CD14-positive monocyte (primary cell): ENCODE measurements at regions of chr19 and their contacts with region 1.

Region 1: GRCh38 chr19:2475702-2476450 is at the start of gene GADD45B:
- DNase-seq: peak; percentile 97 to 99 (median 98)
- H3K4me3 ChIP-seq: peak within 1 kb of the TSS; percentile 93 to 100 (median 94)
- H3K4me3 Mint-ChIP-seq: peak within 1 kb of the TSS; percentile 99 to 100
- H3K27ac ChIP-seq: peak within 1 kb of the TSS; percentile 87 to 92
- H3K27ac Mint-ChIP-seq: peak within 1 kb of the TSS; percentile 92 to 97 (median 94)
- H3K4me1 ChIP-seq: peaks cover 30 to 37% of the 10 kb centered on the region in 2 donors
- H3K4me1 Mint-ChIP-seq: peaks cover 21% of the 10 kb centered on the region
- H3K27me3 ChIP-seq: no peaks in the 10 kb centered on the region
- H3K27me3 Mint-ChIP-seq: peaks cover 0 to 11% (median 1%) of the 10 kb centered on the region in 3 donors
- CTCF ChIP-seq: no peak
- polyA plus RNA-seq, gene GADD45B: 67.4 to 505 (median 76.2) TPM

Region 2: GRCh38 chr19:2461751-2462634 is 13.9 kb before region 1 on chr19:
- intact Hi-C with region 1: no loop called
- DNase-seq: no peak
- H3K4me3 ChIP-seq: peak overlapping the region; percentile 57 to 85 (median 83)
- H3K4me3 Mint-ChIP-seq: peak overlapping the region; percentile 90 to 97
- H3K27ac ChIP-seq: peak overlapping the region in 1 of 2 donors; percentile 33
- H3K27ac Mint-ChIP-seq: peak overlapping the region in 4 of 7 donors; percentile 11 to 90 (median 67)
- H3K4me1 ChIP-seq: peaks cover 23 to 28% of the 10 kb centered on the region in 2 donors
- H3K4me1 Mint-ChIP-seq: peaks cover 29% of the 10 kb centered on the region
- H3K27me3 ChIP-seq: no peaks in the 10 kb centered on the region
- H3K27me3 Mint-ChIP-seq: peaks cover 2 to 9% (median 2%) of the 10 kb centered on the region in 3 donors
- CTCF ChIP-seq: no peak

Region 3: GRCh38 chr19:2494444-2495129 is 18.7 kb after region 1 on chr19:
- intact Hi-C with region 1: loop called (anchors 2 kb)
- DNase-seq: peak; percentile 62 to 86 (median 67)
- H3K4me3 ChIP-seq: peak overlapping the region; percentile 58 to 89 (median 84)
- H3K4me3 Mint-ChIP-seq: peak overlapping the region; percentile 75 to 90
- H3K27ac ChIP-seq: peak overlapping the region; percentile 59 to 79
- H3K27ac Mint-ChIP-seq: peak overlapping the region in 6 of 7 donors; percentile 18 to 76 (median 54)
- H3K4me1 ChIP-seq: peaks cover 24 to 54% of the 10 kb centered on the region in 2 donors
- H3K4me1 Mint-ChIP-seq: peaks cover 32% of the 10 kb centered on the region
- H3K27me3 ChIP-seq: peaks cover 3 to 43% of the 10 kb centered on the region in 2 donors
- H3K27me3 Mint-ChIP-seq: peaks cover 46 to 54% (median 48%) of the 10 kb centered on the region in 3 donors
- CTCF ChIP-seq: no peak

Region 4: GRCh38 chr19:2549701-2550191 is 73.9 kb after region 1 on chr19:
- intact Hi-C with region 1: loop called (anchors 2 to 5 kb)
- DNase-seq: peak; percentile 94 to 98 (median 96)
- H3K4me3 ChIP-seq: peak overlapping the region in 1 of 3 experiments; percentile 19
- H3K4me3 Mint-ChIP-seq: peak overlapping the region; percentile 68 to 81
- H3K27ac ChIP-seq: peak overlapping the region; percentile 67 to 70
- H3K27ac Mint-ChIP-seq: peak overlapping the region; percentile 92 to 98 (median 97)
- H3K4me1 ChIP-seq: peaks cover 49 to 51% of the 10 kb centered on the region in 2 donors
- H3K4me1 Mint-ChIP-seq: peaks cover 47% of the 10 kb centered on the region
- H3K27me3 ChIP-seq: no peaks in the 10 kb centered on the region
- H3K27me3 Mint-ChIP-seq: peaks cover 0 to 7% (median 2%) of the 10 kb centered on the region in 3 donors
- CTCF ChIP-seq: no peak

Region 5: DNA sequence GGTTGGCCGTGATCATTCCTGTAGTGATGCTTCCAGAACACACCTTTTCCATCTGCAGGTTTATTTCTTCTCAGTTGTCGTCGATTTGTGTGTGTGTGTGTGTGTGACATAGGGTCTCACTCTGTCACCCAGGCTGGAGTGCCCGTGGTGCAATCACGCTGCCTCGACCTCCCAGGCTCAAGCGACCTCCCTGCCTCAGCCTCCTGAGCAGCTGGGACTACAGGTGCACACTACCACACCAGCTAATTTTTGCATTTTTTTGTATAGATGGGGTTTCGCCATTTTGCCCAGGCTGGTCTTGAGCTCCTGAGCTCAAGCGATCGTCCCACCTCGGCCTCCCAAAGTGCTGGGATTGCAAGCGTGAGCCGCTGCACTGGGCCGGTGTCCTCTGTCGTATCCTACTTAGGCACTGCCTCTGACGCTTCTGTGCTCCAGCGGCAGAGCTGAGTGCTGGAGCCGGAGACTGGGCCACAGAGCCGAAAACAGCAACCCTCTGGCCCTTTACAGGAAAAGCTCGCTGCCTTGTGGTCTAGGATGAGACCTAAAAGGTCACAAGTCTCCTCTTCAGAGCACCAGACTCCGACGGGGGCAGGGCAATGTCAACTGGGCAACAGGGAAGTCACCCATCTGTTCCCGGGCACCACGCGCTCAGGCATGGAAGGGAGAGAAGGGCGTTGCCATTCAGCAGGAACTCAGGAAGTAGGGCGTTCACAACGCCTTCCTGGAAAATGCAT is 91.5 kb after region 1 on chr19:
- intact Hi-C with region 1: no loop called
- DNase-seq: peak; percentile 39 to 61 (median 53)
- H3K4me3 ChIP-seq: peak overlapping the region in 1 of 3 experiments; percentile 45
- H3K4me3 Mint-ChIP-seq: peak overlapping the region; percentile 59 to 81
- H3K27ac ChIP-seq: peak overlapping the region; percentile 5 to 50
- H3K27ac Mint-ChIP-seq: peak overlapping the region; percentile 30 to 91 (median 55)
- H3K4me1 ChIP-seq: peaks cover 11 to 15% of the 10 kb centered on the region in 2 donors
- H3K4me1 Mint-ChIP-seq: peaks cover 22% of the 10 kb centered on the region
- H3K27me3 ChIP-seq: no peaks in the 10 kb centered on the region
- H3K27me3 Mint-ChIP-seq: peaks cover 1 to 8% (median 7%) of the 10 kb centered on the region in 3 donors
- CTCF ChIP-seq: no peak

Region 6: DNA sequence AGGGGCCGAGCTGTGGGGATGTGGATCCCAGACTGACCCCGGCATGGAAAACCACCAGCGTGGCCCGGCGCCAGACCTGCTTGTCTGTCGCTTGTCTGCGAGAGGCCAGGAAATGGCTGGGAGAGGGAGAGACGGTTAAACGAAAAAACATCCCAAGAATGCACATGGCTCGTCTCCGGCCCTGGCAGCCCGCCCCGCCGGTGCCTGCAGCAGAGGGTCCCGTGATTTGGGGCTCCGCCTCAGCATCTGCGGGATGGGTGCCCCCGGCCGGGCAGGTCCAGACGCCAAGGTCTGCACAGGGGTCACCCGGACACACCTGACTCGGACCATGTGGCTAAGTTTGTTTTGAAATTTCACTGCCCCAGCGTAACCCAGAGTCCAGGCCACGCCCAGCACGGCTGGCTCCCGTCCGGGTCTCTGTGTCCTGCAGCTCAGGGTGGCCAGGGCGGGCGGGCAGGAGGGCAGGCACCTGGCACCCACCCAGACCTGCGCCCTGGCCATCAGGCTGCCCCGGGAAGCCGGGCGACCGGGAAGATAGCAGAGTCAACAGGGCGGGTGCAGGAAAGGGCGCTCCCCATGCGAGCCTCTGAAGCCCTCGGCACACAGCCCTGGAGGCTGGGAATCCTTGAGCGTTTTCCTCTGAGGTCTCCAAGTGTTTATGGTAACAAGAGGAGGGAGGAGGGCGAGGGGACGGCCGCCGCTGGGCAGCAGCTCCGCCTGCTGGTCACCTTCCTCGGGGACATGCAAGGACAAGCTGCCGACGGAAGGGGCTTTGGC is 103.2 kb after region 1 on chr19:
- intact Hi-C with region 1: loop called (anchors 2 kb)
- DNase-seq: peak; percentile 66 to 81 (median 70)
- H3K4me3 ChIP-seq: peak overlapping the region in 2 of 3 experiments; percentile 26 to 69
- H3K4me3 Mint-ChIP-seq: peak overlapping the region; percentile 54 to 80
- H3K27ac ChIP-seq: no peak overlapping the region
- H3K27ac Mint-ChIP-seq: peak overlapping the region in 1 of 7 donors; percentile 57
- H3K4me1 ChIP-seq: peaks cover 12 to 14% of the 10 kb centered on the region in 2 donors
- H3K4me1 Mint-ChIP-seq: peaks cover 17% of the 10 kb centered on the region
- H3K27me3 ChIP-seq: peaks cover 0 to 9% of the 10 kb centered on the region in 2 donors
- H3K27me3 Mint-ChIP-seq: peaks cover 7 to 19% (median 9%) of the 10 kb centered on the region in 3 donors
- CTCF ChIP-seq: peak; percentile 97

Region 7: GRCh38 chr19:2610637-2611482 is 135.0 kb after region 1 on chr19:
- intact Hi-C with region 1: loop called (anchors 1 to 5 kb)
- DNase-seq: peak; percentile 67 to 83 (median 81)
- H3K4me3 ChIP-seq: peak overlapping the region; percentile 36 to 81 (median 71)
- H3K4me3 Mint-ChIP-seq: peak overlapping the region; percentile 88 to 95
- H3K27ac ChIP-seq: peak overlapping the region in 1 of 2 donors; percentile 62
- H3K27ac Mint-ChIP-seq: peak overlapping the region in 6 of 7 donors; percentile 53 to 90 (median 77)
- H3K4me1 ChIP-seq: peaks cover 29 to 42% of the 10 kb centered on the region in 2 donors
- H3K4me1 Mint-ChIP-seq: peaks cover 36% of the 10 kb centered on the region
- H3K27me3 ChIP-seq: no peaks in the 10 kb centered on the region
- H3K27me3 Mint-ChIP-seq: peaks cover 2 to 4% (median 2%) of the 10 kb centered on the region in 3 donors
- CTCF ChIP-seq: peak; percentile 96

Region 8: GRCh38 chr19:2636897-2637683 is 161.2 kb after region 1 on chr19:
- intact Hi-C with region 1: loop called (anchors 2 to 5 kb)
- DNase-seq: peak; percentile 50 to 69 (median 64)
- H3K4me3 ChIP-seq: peak overlapping the region in 1 of 3 experiments; percentile 52
- H3K4me3 Mint-ChIP-seq: peak overlapping the region; percentile 64 to 79
- H3K27ac ChIP-seq: no peak overlapping the region
- H3K27ac Mint-ChIP-seq: peak overlapping the region in 3 of 7 donors; percentile 30 to 66 (median 32)
- H3K4me1 ChIP-seq: peaks cover 41 to 59% of the 10 kb centered on the region in 2 donors
- H3K4me1 Mint-ChIP-seq: peaks cover 57% of the 10 kb centered on the region
- H3K27me3 ChIP-seq: no peaks in the 10 kb centered on the region
- H3K27me3 Mint-ChIP-seq: peaks cover 1 to 7% (median 2%) of the 10 kb centered on the region in 3 donors
- CTCF ChIP-seq: peak; percentile 75

Region 9: GRCh38 chr19:2747349-2747748 is 271.5 kb after region 1 on chr19:
- intact Hi-C with region 1: no loop called
- DNase-seq: no peak
- H3K4me3 ChIP-seq: no peak overlapping the region
- H3K4me3 Mint-ChIP-seq: no peak overlapping the region
- H3K27ac ChIP-seq: no peak overlapping the region
- H3K27ac Mint-ChIP-seq: peak overlapping the region in 1 of 7 donors; percentile 7
- H3K4me1 ChIP-seq: peaks cover 7 to 10% of the 10 kb centered on the region in 2 donors
- H3K4me1 Mint-ChIP-seq: peaks cover 7% of the 10 kb centered on the region
- H3K27me3 ChIP-seq: no peaks in the 10 kb centered on the region
- H3K27me3 Mint-ChIP-seq: peaks cover 8 to 12% (median 10%) of the 10 kb centered on the region in 3 donors
- CTCF ChIP-seq: no peak